ENCODE measurements at regions of chr4 and their contacts with region 1.

Region 1: GRCh38 chr4:183249857-183250256 is 70.2 kb downstream of the CLDN22 start:
- DNase-seq: peak; percentile 24 to 36
- H3K4me3 ChIP-seq: no peak overlapping the region
- H3K4me1 ChIP-seq: peaks cover 8% of the 10 kb centered on the region
- H3K27me3 ChIP-seq: no peaks in the 10 kb centered on the region

Region 2: GRCh38 chr4:182939680-182940079 is 310.2 kb before region 1 on chr4:
- in situ Hi-C with region 1: loop called (anchors 5 kb)
- DNase-seq: no peak
- H3K4me3 ChIP-seq: no peak overlapping the region
- H3K4me1 ChIP-seq: 0 out of 2 replicates have a peak, but pooled peaks cover 3% of the 10 kb centered on the region
- H3K27me3 ChIP-seq: no peaks in the 10 kb centered on the region

Region 3: DNA sequence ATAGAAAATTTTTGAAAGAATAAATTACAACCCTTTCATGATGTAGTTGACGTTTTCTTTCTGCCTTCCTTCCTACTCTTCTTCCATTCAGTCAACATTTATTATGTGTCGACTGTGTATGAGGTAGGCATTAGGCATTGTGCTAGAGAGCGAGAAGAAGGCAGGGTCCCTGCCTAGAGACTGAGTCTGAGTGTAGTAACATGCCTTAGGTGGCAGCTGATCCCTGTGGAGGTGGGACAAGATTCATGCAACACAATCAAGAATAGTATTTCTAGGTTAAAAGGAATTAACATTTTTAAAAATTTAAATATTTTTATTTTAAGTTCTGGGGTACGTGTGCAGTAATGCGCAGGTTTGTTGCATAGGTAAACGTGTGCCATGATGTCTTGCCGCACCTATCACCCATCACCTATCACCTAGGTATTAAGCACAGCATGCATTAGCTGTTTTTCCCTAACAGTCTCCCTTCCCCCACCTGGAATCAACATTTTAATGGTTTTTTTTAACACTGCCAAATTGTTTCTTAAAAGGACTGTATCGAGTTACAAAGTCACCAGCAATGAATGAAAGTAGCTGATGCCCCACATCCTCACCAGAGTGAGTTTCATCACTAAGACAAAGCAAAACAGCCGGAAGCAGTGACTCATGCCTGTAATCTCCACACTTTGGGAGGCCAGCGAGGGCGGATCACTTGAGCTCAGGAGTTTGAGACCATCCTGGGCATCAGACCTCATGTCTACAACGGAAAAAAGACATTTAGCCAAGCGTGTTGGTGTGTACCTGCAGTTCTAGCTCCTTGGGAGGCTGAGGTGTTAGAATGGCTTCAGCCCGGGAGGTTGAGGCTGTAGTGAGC is 66.8 kb before region 1 on chr4:
- in situ Hi-C with region 1: no loop called
- DNase-seq: peak; percentile 73 to 75
- H3K4me3 ChIP-seq: no peak overlapping the region
- H3K4me1 ChIP-seq: peaks cover 11% of the 10 kb centered on the region
- H3K27me3 ChIP-seq: no peaks in the 10 kb centered on the region

Region 4: GRCh38 chr4:183445067-183445428 is 195.2 kb after region 1 on chr4:
- in situ Hi-C with region 1: no loop called
- DNase-seq: peak in 1 of 2 experiments; percentile 54
- H3K4me3 ChIP-seq: peak overlapping the region; percentile 91
- H3K4me1 ChIP-seq: peaks cover 27% of the 10 kb centered on the region
- H3K27me3 ChIP-seq: no peaks in the 10 kb centered on the region

Region 5: GRCh38 chr4:183770906-183771305 is 521.0 kb after region 1 on chr4:
- in situ Hi-C with region 1: no loop called
- DNase-seq: no peak
- H3K4me3 ChIP-seq: no peak overlapping the region
- H3K4me1 ChIP-seq: no peaks in the 10 kb centered on the region
- H3K27me3 ChIP-seq: no peaks in the 10 kb centered on the region